Posterior vena cava (tissue), 2 donors: ENCODE measurements at regions of chr7 and their contacts with region 1.

Region 1: GRCh38 chr7:39465055-39465929 is 100.9 kb upstream of the YAE1 start:
- DNase-seq: no peak

Region 2: DNA sequence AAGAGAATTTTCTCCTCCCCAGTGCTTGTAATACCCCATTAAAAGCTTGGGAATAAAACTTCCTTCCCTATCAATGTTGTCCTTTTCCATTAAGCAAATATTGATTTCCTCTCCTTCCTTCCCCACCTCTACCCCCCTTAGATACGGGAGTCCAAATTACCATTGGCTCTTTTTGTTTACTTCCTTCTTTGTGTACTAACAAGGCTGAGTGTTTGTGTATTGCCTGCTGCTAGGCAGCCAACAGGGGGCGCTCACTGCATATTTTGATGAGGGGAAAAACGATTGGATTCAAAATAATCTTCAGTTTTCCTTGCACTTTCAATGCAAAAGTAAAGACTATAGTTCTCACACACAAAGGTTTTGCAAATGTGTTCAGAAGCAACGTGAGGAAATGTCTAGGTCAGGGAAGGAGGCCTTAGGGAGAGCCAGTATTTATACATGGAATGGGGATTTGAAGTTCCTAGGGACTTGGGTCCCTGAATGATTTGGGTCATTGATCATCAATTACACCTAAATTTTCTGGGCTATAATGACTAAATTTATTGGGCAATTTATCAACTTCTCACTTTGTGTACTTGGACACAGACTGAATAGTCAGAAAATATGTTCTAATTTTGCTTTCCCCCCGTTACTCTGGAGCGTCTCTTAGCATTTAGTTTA is 532.7 kb before region 1 on chr7:
- intact Hi-C with region 1: loop called in 1 of 2 experiments (anchors 10 kb)
- DNase-seq: no peak

Region 3: DNA sequence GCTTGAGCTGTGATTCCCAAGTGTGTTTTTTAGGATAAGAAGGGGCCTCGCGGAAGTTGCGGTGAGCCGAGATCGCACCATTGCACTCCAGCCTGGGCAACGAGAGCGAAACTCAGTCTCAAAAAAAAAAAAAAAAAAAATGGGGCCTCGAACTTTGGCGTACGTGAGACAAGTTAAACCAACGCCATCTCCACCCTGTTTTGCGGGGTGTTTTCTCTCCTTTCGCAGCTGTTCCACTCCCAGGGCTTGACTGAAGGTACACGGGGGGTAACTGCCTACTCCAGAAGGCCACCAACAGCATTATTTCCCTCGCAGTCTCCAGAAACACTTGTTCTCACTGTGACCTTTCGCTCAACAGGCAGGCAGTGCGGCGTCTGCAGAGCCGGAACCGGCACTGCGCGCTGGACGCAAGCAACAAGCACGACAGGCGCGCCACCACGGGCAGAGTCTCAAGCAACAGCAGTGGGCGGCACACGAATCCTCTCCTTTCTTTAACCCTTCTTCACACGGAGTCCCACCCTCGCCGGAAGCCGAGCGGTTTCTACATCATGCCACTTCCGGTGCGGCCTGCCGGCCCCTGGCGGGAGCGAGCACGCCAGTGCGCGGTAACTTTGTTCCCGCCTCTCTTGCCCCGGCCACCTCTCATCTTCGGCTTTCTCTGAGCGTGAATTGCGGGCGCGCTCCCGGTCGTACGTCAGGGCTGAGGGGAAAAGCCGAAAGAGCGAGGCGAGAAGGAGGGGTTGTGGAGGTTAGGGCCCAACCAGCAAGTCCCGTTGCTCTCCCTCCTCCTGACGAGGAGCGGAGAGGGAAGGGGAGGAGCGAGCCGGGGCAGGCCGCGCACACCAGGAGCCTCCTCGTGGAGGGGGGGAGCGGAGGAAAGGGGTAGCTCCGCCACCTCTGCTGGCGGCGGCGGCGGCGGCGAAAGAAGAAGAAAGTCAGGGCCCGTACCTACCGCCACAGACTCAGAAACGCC is 483.9 kb after region 1 on chr7:
- intact Hi-C with region 1: no loop called
- DNase-seq: peak; percentile 100